AG04449 (cell line): ENCODE measurements at regions of chr2 and their contacts with region 1.

Region 1: GRCh38 chr2:74391580-74392448 is 11.7 kb upstream of the DCTN1 start:
- DNase-seq: peak; percentile 29
- H3K4me3 ChIP-seq: peak overlapping the region; percentile 72
- CTCF ChIP-seq: peak; percentile 90

Region 2: DNA sequence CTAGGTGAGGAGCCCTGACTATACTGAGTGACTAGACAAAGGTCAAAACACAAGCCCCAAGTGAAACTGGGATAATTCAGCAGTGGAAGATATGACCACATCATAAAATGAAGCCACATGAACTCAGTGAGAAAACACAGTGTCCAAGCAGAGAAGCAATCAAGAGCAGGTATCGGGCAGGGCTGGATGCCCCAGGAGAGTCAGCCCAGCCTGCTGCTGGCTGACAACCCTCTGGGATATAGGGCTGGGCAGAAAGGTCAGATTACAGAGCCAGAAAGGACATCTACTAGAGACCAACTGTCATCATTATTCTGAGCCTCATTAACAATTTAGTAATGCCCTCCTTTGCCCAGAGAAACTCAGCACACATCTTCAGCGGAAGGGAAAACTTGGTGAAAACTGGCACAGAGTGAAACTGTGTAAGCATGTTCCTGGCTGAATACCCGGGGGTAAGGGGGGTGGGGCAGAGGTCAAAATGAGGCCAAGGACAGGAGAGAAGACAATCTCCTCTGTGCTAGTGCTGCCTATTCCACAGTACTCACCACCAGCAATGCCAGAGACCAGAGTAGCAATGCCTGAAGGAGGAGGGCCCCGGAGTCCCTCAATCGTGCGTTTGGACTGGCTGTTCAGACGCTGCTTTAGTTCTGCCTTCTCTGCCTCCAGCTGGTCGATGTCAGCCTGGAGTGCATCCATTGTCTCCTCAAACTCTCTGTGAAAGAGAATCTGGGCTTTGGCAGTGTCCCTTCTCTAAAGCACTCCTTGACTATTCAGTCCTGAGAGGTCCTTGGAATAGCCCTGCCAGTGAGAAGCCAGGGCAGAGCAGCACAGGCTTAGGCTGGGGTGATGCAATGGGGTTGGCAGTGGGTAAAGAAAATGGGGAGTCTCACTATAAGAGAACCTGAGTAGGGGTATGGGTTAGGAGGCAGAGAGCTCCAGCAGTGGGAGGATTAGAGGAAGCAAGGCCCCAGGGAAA is 27.0 kb before region 1 on chr2:
- CTCF ChIA-PET with region 1: interaction called, 11 read pairs
- POLR2A ChIA-PET with region 1: no interaction called
- DNase-seq: no peak
- H3K4me3 ChIP-seq: no peak overlapping the region
- CTCF ChIP-seq: no peak

Region 3: DNA sequence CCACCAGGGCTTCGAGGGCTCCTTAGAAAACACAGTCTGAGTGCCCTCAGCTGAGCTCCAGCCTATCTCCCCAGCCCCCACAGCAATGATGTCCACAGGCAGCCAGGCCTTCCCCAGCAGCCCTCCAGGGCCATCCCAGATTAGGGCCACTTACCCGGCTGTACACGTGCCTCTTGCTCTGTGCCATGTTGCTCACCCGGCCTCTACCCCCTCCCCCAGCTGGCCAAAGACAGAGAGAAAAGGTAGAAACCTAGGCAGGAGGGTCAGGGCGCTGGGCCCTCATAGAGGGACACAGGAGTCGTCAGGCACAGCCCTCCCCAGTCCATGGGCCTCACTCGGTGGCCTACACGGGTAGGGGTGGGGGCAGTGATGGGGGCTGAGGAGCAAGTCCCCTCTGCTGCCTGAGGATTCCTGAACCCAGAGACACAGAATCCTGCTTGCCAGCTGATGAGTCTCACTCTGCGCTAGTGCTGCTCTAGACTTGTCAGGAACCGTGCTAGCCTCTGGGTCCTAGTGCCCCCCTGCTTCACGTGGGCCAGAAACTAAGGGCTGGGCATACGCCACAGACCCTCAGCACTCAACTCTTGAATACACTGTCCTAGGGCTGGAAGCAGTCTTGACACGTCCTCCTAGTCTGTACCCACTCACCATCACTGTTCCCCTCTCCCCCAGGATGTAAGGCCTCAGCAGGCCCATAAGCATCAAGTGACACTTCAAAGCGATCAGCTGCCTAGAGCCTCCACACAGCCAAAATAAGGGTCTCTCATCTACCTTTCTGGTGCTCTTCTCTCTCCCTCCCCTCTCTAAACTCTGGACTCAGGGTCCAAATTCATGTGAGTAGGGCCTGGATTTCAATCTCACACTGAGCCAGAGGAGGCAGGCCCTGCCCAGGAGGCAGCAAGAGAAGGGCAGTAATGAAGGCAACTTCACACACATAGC is 11.7 kb before region 1 on chr2 and contains the start of gene DCTN1:
- CTCF ChIA-PET with region 1: interaction called, 51 read pairs
- POLR2A ChIA-PET with region 1: interaction called, 4 read pairs
- DNase-seq: peak; percentile 23
- H3K4me3 ChIP-seq: peak within 1 kb of the TSS; percentile 68
- CTCF ChIP-seq: no peak

Region 4: GRCh38 chr2:74406035-74406434 is 14.2 kb after region 1 on chr2:
- CTCF ChIA-PET with region 1: interaction called, 62 read pairs
- POLR2A ChIA-PET with region 1: no interaction called
- DNase-seq: no peak
- H3K4me3 ChIP-seq: no peak overlapping the region
- CTCF ChIP-seq: no peak

Region 5: GRCh38 chr2:74413001-74413698 is 21.3 kb after region 1 on chr2:
- CTCF ChIA-PET with region 1: interaction called, 12 read pairs
- POLR2A ChIA-PET with region 1: no interaction called
- DNase-seq: no peak
- H3K4me3 ChIP-seq: no peak overlapping the region
- CTCF ChIP-seq: no peak

Region 6: DNA sequence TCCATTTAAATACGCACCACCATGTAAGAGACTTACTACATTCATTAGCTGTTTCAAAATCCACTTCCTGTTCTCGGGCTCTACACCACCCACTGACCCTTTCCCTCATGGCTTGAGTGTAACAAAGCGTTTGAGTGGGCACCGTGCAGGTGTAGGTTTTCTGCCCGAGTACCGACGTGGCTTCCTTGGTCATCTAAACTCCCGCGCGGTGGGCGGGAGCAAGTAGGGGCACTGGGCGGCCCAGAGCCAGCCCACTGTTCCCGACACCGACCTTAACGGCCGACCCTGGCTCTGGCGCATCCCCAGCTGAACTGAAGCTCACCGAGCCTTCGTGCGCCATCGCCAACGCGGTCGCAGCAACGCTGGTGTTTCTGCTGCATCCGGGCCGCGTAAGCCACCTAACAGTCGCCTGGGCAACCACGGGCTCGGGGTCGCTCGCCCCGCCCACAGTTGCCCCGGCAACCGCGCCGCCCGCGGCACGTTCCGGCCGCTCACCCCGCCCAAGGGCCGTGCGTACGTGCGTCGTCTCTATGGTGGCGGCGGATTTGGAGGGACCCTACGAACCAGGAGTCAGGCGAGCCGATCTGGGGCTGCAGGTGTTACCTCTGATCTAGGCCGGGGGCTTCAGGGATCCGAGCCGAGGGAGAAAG is 29.5 kb after region 1 on chr2 and contains the starts of genes C2orf81 and WDR54:
- CTCF ChIA-PET with region 1: interaction called, 14 read pairs
- POLR2A ChIA-PET with region 1: no interaction called
- DNase-seq: no peak
- H3K4me3 ChIP-seq: peak within 1 kb of the TSS; percentile 83
- CTCF ChIP-seq: no peak

Region 7: GRCh38 chr2:74440378-74441169 is 48.8 kb after region 1 on chr2:
- CTCF ChIA-PET with region 1: interaction called, 11 read pairs
- POLR2A ChIA-PET with region 1: no interaction called
- DNase-seq: no peak
- H3K4me3 ChIP-seq: peak overlapping the region; percentile 71
- CTCF ChIP-seq: peak; percentile 49